Common myeloid progenitor, CD34-positive (primary cell): ENCODE measurements at regions of chr1 and their contacts with region 1.

Region 1: GRCh38 chr1:94061513-94062443 is 59.2 kb downstream of the ABCA4 start:
- DNase-seq: peak; percentile 58 to 72 (median 69)
- H3K4me3 ChIP-seq: no peak overlapping the region
- H3K27ac ChIP-seq: no peak overlapping the region
- H3K4me1 ChIP-seq: peaks cover 0 to 11% (median 1%) of the 10 kb centered on the region in 4 experiments
- H3K27me3 ChIP-seq: peaks cover 0 to 22% (median 5%) of the 10 kb centered on the region in 5 experiments

Region 2: GRCh38 chr1:94039514-94039870 is 22.3 kb before region 1 on chr1:
- CTCF ChIA-PET with region 1: interaction called, 92 read pairs
- POLR2A ChIA-PET with region 1: no interaction called
- DNase-seq: peak; percentile 61 to 81 (median 70)
- H3K4me3 ChIP-seq: no peak overlapping the region
- H3K27ac ChIP-seq: no peak overlapping the region
- H3K4me1 ChIP-seq: peaks cover 0 to 5% (median 5%) of the 10 kb centered on the region in 4 experiments
- H3K27me3 ChIP-seq: peaks cover 0 to 17% (median 16%) of the 10 kb centered on the region in 5 experiments

Region 3: DNA sequence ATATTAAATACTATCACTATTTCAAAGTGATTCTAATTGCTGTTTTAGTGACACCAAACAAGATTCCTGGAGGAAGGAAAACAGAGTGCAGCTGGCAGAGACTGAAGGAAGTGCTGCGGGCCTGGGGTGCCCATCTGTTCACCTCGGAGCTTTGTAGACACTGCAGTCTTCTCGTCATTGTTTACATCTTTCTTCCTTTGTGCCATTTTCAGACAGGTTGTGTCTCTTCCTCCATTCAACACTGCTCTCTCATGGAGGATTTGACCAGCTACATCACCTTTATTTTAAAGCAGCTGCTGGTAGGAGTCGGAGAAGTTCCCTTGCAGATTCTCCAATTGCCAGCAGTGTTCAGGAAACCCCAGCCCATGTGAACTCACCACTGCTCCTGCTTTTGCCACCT is 21.9 kb after region 1 on chr1:
- CTCF ChIA-PET with region 1: interaction called, 24 read pairs
- POLR2A ChIA-PET with region 1: no interaction called
- DNase-seq: no peak
- H3K4me3 ChIP-seq: no peak overlapping the region
- H3K27ac ChIP-seq: no peak overlapping the region
- H3K4me1 ChIP-seq: peaks cover 5 to 21% (median 12%) of the 10 kb centered on the region in 4 experiments
- H3K27me3 ChIP-seq: no peaks in the 10 kb centered on the region

Region 4: DNA sequence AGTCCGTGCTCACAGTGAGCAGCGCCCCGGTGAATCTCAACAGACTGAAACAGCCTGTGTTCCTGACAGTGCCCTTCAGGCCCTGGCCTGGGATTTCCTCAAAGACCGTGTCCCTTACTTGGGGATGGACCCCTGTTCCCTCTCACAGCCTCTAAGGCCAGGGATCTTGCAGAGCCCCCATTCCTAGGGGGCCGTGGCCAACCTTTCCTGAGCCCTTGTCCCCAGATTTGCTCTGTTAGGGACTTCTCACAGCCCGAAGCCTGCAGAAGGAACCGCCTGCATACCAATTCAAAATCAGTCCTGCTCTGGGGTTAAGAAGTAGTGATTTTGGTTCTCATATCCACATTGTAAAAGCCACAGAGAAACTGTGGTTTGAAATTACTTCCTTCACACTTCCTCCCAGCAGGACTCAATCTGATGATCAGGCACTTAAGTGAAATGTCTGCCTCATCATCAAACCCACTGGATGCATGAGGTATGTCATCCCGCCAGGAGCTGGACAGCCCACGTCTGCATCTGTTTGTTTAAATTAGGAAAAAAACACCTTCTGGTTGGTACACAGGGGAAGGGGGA is 44.3 kb after region 1 on chr1:
- CTCF ChIA-PET with region 1: interaction called, 68 read pairs
- POLR2A ChIA-PET with region 1: no interaction called
- DNase-seq: peak in 2 of 3 donors; percentile 82 to 84
- H3K4me3 ChIP-seq: no peak overlapping the region
- H3K27ac ChIP-seq: no peak overlapping the region
- H3K4me1 ChIP-seq: peaks cover 0 to 33% (median 24%) of the 10 kb centered on the region in 4 experiments
- H3K27me3 ChIP-seq: peaks cover 0 to 66% (median 46%) of the 10 kb centered on the region in 5 experiments

Region 5: DNA sequence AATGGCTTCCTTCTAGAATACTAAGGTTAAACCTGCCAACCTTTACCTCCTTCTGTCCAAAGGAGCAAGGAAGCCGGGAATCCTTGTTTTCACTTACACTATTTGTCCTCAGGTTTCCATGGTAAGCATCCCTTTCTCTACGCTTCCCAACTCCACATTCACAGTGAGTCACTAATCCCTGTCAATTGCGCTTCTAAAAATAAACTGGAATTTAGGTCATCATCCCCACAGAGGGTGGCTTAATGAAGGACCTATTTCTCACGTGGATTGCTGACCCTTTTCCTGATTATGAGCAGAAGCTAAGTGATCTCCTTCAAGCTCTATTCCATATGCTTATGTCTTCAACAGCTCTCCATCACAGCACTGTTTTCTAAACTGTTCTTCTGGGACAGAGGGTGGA is 99.0 kb after region 1 on chr1:
- CTCF ChIA-PET with region 1: no interaction called
- POLR2A ChIA-PET with region 1: no interaction called
- DNase-seq: no peak
- H3K4me3 ChIP-seq: no peak overlapping the region
- H3K27ac ChIP-seq: no peak overlapping the region
- H3K4me1 ChIP-seq: no peaks in the 10 kb centered on the region
- H3K27me3 ChIP-seq: no peaks in the 10 kb centered on the region

Region 6: GRCh38 chr1:94228640-94229375 is 167.0 kb after region 1 on chr1:
- CTCF ChIA-PET with region 1: interaction called, 204 read pairs
- POLR2A ChIA-PET with region 1: no interaction called
- DNase-seq: no peak
- H3K4me3 ChIP-seq: no peak overlapping the region
- H3K27ac ChIP-seq: no peak overlapping the region
- H3K4me1 ChIP-seq: peaks cover 0 to 7% (median 2%) of the 10 kb centered on the region in 4 experiments
- H3K27me3 ChIP-seq: peaks cover 2 to 25% (median 3%) of the 10 kb centered on the region in 5 experiments

Region 7: GRCh38 chr1:94259635-94260289 is 198.0 kb after region 1 on chr1:
- CTCF ChIA-PET with region 1: interaction called, 16 read pairs
- POLR2A ChIA-PET with region 1: no interaction called
- DNase-seq: no peak
- H3K4me3 ChIP-seq: no peak overlapping the region
- H3K27ac ChIP-seq: no peak overlapping the region
- H3K4me1 ChIP-seq: no peaks in the 10 kb centered on the region
- H3K27me3 ChIP-seq: peaks cover 0 to 6% (median 0%) of the 10 kb centered on the region in 5 experiments